Common myeloid progenitor, CD34-positive (primary cell): ENCODE measurements at regions of chr3 and their contacts with region 1.

Region 1: DNA sequence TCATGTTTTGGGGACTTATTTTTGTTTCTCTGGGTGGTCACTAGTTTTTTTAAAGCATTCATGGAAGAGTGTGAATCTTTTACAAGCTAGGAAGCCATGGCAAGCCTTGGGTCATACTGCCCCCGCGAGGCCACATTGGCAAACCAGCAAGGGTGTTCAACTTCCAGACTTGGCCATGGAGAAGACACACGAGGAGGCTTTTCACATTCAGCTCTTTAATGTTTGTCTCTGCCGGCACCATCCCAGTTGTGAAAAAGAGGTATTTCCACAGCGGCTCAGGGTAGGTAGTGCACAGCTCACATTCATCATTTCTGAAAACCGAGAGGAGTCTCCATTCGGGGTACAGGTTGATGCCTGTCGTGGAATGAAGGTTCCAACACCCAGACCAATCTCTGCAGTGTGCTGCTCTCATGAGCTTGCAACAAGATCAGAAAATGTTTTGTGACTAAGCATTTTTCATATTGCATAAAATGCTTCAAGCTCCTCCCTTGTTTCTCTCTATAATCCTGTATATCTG is 7.7 kb downstream of the CCR5 start:
- DNase-seq: peak; percentile 64 to 83 (median 77)
- H3K4me3 ChIP-seq: peak overlapping the region in 1 of 7 experiments; percentile 6
- H3K27ac ChIP-seq: no peak overlapping the region
- H3K4me1 ChIP-seq: peaks cover 9 to 58% (median 39%) of the 10 kb centered on the region in 4 experiments
- H3K27me3 ChIP-seq: no peaks in the 10 kb centered on the region

Region 2: GRCh38 chr3:46208167-46208704 is 170.2 kb before region 1 on chr3 and contains the start of gene CCR1:
- CTCF ChIA-PET with region 1: interaction called, 87 read pairs
- POLR2A ChIA-PET with region 1: interaction called, 3 read pairs
- DNase-seq: peak; percentile 53 to 91 (median 90)
- H3K4me3 ChIP-seq: peak within 1 kb of the TSS in 4 of 7 experiments; percentile 11 to 49 (median 30)
- H3K27ac ChIP-seq: no peak within 1 kb of the TSS
- H3K4me1 ChIP-seq: peaks cover 14 to 34% (median 26%) of the 10 kb centered on the region in 4 experiments
- H3K27me3 ChIP-seq: no peaks in the 10 kb centered on the region

Region 3: GRCh38 chr3:46214751-46215352 is 163.6 kb before region 1 on chr3:
- CTCF ChIA-PET with region 1: interaction called, 87 read pairs
- POLR2A ChIA-PET with region 1: no interaction called
- DNase-seq: peak; percentile 35 to 46 (median 44)
- H3K4me3 ChIP-seq: no peak overlapping the region
- H3K27ac ChIP-seq: no peak overlapping the region
- H3K4me1 ChIP-seq: peaks cover 9 to 30% (median 19%) of the 10 kb centered on the region in 4 experiments
- H3K27me3 ChIP-seq: no peaks in the 10 kb centered on the region

Region 4: GRCh38 chr3:46400000-46400734 is 21.7 kb after region 1 on chr3:
- CTCF ChIA-PET with region 1: interaction called, 18 read pairs
- POLR2A ChIA-PET with region 1: interaction called, 4 read pairs
- DNase-seq: no peak
- H3K4me3 ChIP-seq: no peak overlapping the region
- H3K27ac ChIP-seq: no peak overlapping the region
- H3K4me1 ChIP-seq: peaks cover 4 to 38% (median 10%) of the 10 kb centered on the region in 4 experiments
- H3K27me3 ChIP-seq: no peaks in the 10 kb centered on the region

Region 5: DNA sequence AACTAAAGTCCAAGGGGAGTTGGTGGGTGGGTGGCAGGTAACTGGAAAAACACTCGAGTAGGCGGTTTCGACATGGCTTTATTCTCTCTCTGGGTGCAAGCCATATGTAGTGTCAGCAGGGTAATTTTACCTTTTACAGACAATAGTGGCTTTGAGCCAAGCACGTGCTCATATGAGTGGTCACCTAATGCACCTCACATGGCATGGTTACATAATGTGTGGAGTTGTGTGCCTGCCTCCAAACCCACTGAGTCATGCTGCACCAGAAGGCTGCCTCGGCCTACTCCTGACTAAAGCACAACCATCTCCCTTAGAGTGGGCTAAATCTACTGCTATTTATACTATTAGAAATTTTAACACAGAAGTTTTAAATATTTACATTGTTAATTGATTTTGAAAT is 45.1 kb after region 1 on chr3:
- CTCF ChIA-PET with region 1: interaction called, 14 read pairs
- POLR2A ChIA-PET with region 1: no interaction called
- DNase-seq: no peak
- H3K4me3 ChIP-seq: no peak overlapping the region
- H3K27ac ChIP-seq: no peak overlapping the region
- H3K4me1 ChIP-seq: peaks cover 0 to 20% (median 6%) of the 10 kb centered on the region in 4 experiments
- H3K27me3 ChIP-seq: no peaks in the 10 kb centered on the region